Left ventricle myocardium inferior (tissue), 1 donor: ENCODE measurements at regions of chr6 and their contacts with region 1.

Region 1: GRCh38 chr6:593139-593906 is 63.6 kb downstream of the HUS1B start:
- DNase-seq: no peak
- H3K4me3 ChIP-seq: no peak overlapping the region
- H3K27ac ChIP-seq: no peak overlapping the region
- H3K4me1 ChIP-seq: peaks cover 4% of the 10 kb centered on the region
- H3K27me3 ChIP-seq: no peaks in the 10 kb centered on the region
- CTCF ChIP-seq: peak; percentile 82

Region 2: DNA sequence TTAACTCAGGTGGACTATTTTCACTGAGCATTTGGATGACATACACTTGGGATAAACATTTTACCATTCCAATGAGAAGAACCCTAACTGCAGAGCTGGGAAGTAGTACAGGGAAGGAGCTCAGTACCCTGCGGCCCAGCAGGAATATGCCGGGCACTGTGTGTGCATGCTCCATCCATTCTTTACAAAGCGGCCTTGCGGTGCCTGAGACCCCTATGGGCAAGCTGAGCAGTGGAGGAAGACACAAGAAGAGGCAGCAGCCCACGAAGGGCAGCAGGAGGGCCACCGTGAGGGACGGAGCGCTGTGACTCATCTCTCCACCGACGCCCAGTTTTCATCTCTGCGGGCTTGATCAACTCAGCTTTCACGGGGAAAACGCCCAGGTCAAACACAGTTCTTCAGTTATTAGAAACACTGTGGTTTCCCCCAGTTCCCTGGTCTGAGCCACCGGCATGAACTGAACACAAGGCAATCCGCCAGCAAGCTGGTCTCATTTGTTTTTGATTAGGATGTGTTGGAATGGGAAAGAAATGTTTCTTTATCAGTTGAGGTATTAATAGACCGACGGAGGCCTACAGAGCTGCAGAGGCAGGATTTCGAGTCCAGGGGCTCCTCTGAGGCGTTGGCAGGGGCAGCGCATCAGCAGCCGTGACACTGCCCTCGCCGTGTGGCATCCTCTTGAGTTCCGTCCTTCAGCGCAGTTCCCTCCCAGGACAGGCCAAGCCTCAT is 156.9 kb before region 1 on chr6:
- intact Hi-C with region 1: no loop called
- DNase-seq: no peak
- H3K4me3 ChIP-seq: no peak overlapping the region
- H3K27ac ChIP-seq: no peak overlapping the region
- H3K4me1 ChIP-seq: peaks cover 22% of the 10 kb centered on the region
- H3K27me3 ChIP-seq: peaks cover 5% of the 10 kb centered on the region
- CTCF ChIP-seq: no peak

Region 3: GRCh38 chr6:722077-722524 is 128.8 kb after region 1 on chr6:
- intact Hi-C with region 1: loop called (anchors 5 kb)
- DNase-seq: peak; percentile 56
- H3K4me3 ChIP-seq: no peak overlapping the region
- H3K27ac ChIP-seq: no peak overlapping the region
- H3K4me1 ChIP-seq: peaks cover 6% of the 10 kb centered on the region
- H3K27me3 ChIP-seq: peaks cover 11% of the 10 kb centered on the region
- CTCF ChIP-seq: peak; percentile 94